PC-9 (cell line): ENCODE measurements at regions of chr14 and their contacts with region 1.

Region 1: DNA sequence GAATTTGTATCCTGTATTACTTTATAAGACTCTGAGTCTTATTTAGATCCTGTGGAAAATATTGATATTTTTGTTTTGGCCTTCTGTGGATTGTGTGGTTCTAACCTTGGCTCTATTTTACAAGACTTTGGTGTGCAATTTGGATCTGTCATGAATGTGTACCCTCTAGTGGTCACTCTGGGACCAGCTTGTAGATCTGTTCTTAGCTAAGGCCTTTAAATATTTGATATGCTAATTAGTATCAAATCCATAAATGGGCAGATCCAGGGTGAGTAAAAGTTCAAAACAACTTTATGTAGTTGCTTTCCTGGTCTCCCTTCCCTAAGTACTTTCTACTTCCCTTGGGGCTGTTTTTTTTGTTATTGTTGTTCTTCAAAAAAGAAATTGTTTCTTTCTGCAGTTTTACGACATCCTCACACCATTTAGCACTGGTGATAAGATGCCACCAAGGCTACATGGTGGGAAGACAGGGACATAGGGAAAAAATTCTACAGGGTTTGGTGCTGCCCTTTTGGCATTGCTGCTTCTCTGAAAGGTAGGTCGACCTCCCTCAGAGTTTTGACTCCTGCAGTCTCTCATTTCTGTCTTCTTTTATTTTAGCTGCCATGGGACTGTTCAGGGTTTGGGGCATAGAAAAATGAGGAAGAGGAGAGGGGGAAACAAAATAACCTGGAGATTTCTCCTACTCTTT is 238.5 kb downstream of the GPHN start:
- DNase-seq: peak in 1 of 2 experiments; percentile 6
- H3K4me3 ChIP-seq: no peak overlapping the region
- H3K27ac ChIP-seq: no peak overlapping the region
- H3K4me1 ChIP-seq: no peaks in the 10 kb centered on the region
- H3K27me3 ChIP-seq: no peaks in the 10 kb centered on the region
- CTCF ChIP-seq: peak; percentile 78

Region 2: DNA sequence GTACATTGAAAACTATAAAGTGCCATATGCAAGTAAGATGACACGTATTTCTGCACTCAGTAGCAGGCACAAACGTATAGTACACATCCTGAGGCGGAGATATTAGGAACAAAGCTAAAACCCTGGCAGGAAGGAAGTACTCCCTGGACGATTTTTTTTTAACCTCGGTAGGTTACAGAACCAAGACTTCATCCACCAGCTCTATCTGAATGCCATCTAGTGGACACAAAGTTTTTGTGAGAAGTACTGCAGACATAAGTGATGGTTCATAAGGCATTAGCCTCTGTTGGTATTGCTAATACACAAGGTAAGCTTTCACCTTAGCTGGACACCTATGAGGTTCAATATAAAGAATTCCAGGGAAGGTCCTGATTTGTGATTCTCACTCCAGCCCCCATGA is 343.3 kb before region 1 on chr14:
- CTCF ChIA-PET with region 1: no interaction called
- POLR2A ChIA-PET with region 1: no interaction called
- intact Hi-C with region 1: no loop called
- DNase-seq: peak in 1 of 2 experiments; percentile 62
- H3K4me3 ChIP-seq: no peak overlapping the region
- H3K27ac ChIP-seq: no peak overlapping the region
- H3K4me1 ChIP-seq: no peaks in the 10 kb centered on the region
- H3K27me3 ChIP-seq: no peaks in the 10 kb centered on the region
- CTCF ChIP-seq: peak; percentile 65

Region 3: DNA sequence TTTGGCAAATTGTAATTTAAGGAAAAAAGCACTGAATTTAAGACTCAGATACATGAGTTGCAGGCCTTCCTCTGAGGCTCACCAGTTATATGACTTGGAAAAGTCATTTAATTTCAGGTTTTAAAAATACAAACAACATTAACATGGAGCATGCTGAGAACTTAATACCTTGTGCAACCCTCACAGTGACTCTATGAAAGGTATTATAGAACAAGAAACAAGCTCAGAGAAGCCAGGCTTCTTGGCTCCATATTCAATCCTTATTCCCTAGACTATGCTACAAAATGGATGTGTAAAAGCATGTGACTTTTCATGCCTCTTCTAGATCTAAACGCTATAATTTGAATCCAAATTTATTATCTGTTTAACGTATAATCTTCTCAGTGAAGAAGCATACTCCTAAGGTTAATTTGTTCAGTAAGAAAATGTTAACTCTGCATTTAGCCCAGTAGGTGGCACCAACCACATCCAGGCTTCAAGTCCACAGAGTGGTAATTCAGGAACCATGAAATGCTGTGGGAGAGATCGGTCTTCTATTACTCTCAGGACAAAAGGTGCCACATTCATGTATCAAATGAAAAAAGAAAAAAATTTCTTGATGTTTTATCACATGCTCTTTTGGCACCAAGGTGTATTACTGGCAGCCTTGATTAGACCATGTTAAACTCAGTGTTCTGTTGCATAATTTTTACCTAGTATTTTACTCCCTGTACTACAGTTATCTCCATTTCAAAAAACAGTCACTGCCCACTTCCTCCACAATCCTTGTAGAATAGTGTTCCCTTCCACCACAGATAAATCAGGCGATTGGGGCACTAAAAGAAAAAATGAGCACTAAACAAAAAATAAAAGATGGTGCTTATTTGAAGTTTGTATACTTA is 251.0 kb before region 1 on chr14:
- CTCF ChIA-PET with region 1: interaction called, 3 read pairs
- POLR2A ChIA-PET with region 1: no interaction called
- intact Hi-C with region 1: loop called (anchors 5 kb)
- DNase-seq: peak; percentile 33 to 62
- H3K4me3 ChIP-seq: no peak overlapping the region
- H3K27ac ChIP-seq: no peak overlapping the region
- H3K4me1 ChIP-seq: no peaks in the 10 kb centered on the region
- H3K27me3 ChIP-seq: no peaks in the 10 kb centered on the region
- CTCF ChIP-seq: peak; percentile 85

Region 4: GRCh38 chr14:66638689-66639088 is 107.8 kb before region 1 on chr14:
- CTCF ChIA-PET with region 1: no interaction called
- POLR2A ChIA-PET with region 1: no interaction called
- intact Hi-C with region 1: no loop called
- DNase-seq: no peak
- H3K4me3 ChIP-seq: no peak overlapping the region
- H3K27ac ChIP-seq: no peak overlapping the region
- H3K4me1 ChIP-seq: no peaks in the 10 kb centered on the region
- H3K27me3 ChIP-seq: no peaks in the 10 kb centered on the region
- CTCF ChIP-seq: no peak